ENCODE measurements at regions of chr3 and their contacts with region 1.

Region 1: DNA sequence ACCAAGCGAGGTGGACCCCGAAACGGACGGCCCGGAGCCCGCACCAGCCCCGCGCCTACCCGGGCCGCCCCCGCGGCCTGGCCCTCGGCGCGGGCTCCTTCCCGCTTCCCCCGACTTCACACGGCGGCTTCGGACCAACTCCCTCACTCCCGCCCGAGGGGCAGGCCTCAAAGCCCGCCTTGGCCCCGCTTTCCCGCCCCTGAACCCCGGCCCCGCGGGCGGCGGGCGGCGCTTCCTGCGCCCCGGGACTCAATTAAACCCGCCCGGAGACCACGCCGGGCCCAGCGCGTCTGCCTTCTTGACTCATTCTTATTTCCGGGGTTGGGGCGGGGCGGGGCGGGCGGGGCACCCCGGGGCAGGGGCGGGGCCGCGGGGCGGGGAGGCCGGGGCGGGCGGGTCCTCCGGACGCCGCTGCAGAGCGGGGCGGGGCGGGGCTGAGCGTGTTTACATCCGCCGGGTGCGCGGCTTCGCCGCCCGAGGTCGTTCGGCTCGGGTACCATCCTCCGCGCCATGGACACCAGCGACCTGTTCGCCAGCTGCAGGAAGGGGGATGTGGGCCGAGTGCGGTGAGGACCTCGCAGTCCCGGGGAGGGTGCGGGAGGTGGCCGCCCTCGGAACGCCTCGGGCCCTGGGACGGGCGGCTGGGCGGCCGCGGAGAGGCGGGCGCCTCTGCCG is at the start of gene ABTB1:
- ATAC-seq: peak; percentile 78 to 85 (median 83)
- H3K4me3 ChIP-seq: peak within 1 kb of the TSS; percentile 33 to 62 (median 46)
- H3K27ac ChIP-seq: peak within 1 kb of the TSS in 1 of 2 donors; percentile 65
- H3K4me1 ChIP-seq: peaks cover 2 to 4% of the 10 kb centered on the region in 2 donors
- total RNA-seq, gene ABTB1: 0.60 to 61.4 (median 3.0) TPM

Region 2: GRCh38 chr3:127997961-127998360 is 325.3 kb after region 1 on chr3:
- in situ Hi-C with region 1: loop called in 1 of 9 experiments (anchors 25 kb)
- ATAC-seq: peak in 2 of 8 experiments; percentile 38 to 94
- H3K4me3 ChIP-seq: no peak overlapping the region
- H3K27ac ChIP-seq: no peak overlapping the region
- H3K4me1 ChIP-seq: no peaks in the 10 kb centered on the region